WTC11 (cell line): ENCODE measurements at regions of chr21 and their contacts with region 1.

Region 1: DNA sequence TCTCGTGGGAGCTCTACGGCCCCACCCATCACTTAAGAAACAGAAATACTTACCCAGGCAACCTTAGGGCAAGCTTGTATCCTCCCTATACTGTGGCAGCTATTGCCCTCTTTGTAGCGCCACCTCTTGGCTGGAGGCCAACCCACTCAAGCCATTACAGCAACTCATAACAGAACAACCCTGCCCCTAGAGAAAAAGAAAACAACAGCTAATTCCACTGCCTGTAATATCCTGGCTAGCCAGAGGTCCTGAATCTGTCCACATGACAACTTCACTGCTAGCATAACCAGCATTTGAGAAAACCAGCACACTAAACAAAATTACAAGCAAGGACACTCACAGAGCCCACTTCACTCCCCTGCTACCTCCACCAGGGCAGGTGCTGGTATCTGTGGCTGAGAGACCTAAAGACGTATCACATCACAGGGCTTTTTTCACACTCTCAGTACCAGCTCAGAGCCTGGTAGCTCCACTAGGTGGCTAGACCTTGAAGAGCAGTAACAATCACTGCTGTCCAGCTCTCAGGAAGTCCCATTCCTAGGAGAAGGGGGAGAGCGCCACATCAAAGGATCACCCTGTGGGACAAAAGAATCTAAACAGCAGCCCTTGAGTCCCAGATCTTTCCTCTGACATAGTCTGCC is 14.5 kb upstream of the MX1 start:
- DNase-seq: no peak
- ATAC-seq: peak; percentile 79
- H3K4me3 Mint-ChIP-seq: no peak overlapping the region
- H3K27ac Mint-ChIP-seq: no peak overlapping the region
- H3K4me1 Mint-ChIP-seq: no peaks in the 10 kb centered on the region
- H3K27me3 Mint-ChIP-seq: no peaks in the 10 kb centered on the region
- CTCF ChIP-seq: no peak

Region 2: GRCh38 chr21:41369105-41369919 is 42.3 kb before region 1 on chr21:
- CTCF ChIA-PET with region 1: interaction called, 26 read pairs
- POLR2A ChIA-PET with region 1: no interaction called
- DNase-seq: peak; percentile 64
- ATAC-seq: peak; percentile 92
- H3K4me3 Mint-ChIP-seq: peak overlapping the region; percentile 68
- H3K27ac Mint-ChIP-seq: no peak overlapping the region
- H3K4me1 Mint-ChIP-seq: peaks cover 12% of the 10 kb centered on the region
- H3K27me3 Mint-ChIP-seq: no peaks in the 10 kb centered on the region; the same call in 1 of the 2 replicates
- CTCF ChIP-seq: no peak

Region 3: GRCh38 chr21:41396506-41397075 is 15.0 kb before region 1 on chr21:
- CTCF ChIA-PET with region 1: interaction called, 10 read pairs
- POLR2A ChIA-PET with region 1: interaction called, 3 read pairs
- DNase-seq: no peak
- ATAC-seq: peak; percentile 80
- H3K4me3 Mint-ChIP-seq: no peak overlapping the region
- H3K27ac Mint-ChIP-seq: no peak overlapping the region
- H3K4me1 Mint-ChIP-seq: peaks cover 16% of the 10 kb centered on the region
- H3K27me3 Mint-ChIP-seq: no peaks in the 10 kb centered on the region; the same call in 1 of the 2 replicates
- CTCF ChIP-seq: no peak

Region 4: DNA sequence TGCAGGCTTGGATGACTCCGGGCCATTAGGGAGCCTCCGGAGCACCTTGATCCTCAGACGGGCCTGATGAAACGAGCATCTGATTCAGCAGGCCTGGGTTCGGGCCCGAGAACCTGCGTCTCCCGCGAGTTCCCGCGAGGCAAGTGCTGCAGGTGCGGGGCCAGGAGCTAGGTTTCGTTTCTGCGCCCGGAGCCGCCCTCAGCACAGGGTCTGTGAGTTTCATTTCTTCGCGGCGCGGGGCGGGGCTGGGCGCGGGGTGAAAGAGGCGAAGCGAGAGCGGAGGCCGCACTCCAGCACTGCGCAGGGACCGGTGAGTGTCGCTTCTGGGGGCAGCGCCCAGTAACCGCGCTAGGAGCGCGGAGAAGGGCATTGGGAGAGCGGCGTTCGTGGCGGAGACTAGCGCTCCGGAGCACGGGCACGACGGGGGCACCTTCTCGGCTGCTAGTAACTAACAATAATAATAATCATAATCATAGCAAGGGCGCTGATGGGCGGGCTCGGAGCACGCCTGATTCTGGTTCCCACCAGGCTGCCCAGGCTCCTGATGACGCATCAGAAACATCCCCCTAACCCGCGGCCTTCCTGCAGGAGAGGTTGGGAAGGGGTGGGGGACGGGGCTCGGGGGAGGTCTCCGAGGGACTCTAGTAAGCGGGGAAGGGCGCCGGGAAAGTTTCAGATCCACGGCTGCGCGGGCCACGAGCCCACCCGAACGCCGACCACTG is 14.5 kb after region 1 on chr21 and contains the start of gene MX1:
- CTCF ChIA-PET with region 1: interaction called, 17 read pairs
- POLR2A ChIA-PET with region 1: no interaction called
- DNase-seq: peak; percentile 68
- ATAC-seq: peak; percentile 83
- H3K4me3 Mint-ChIP-seq: peak within 1 kb of the TSS; percentile 76
- H3K27ac Mint-ChIP-seq: no peak within 1 kb of the TSS
- H3K4me1 Mint-ChIP-seq: peaks cover 26% of the 10 kb centered on the region
- H3K27me3 Mint-ChIP-seq: peaks cover 69% of the 10 kb centered on the region
- CTCF ChIP-seq: no peak
- total RNA-seq, gene MX1: 3.6 to 4.6 TPM (median 4.0 TPM) in 3 replicates

Region 5: GRCh38 chr21:41521489-41522027 is 110.0 kb after region 1 on chr21:
- CTCF ChIA-PET with region 1: no interaction called
- POLR2A ChIA-PET with region 1: no interaction called
- DNase-seq: no peak
- ATAC-seq: no peak
- H3K4me3 Mint-ChIP-seq: no peak overlapping the region
- H3K27ac Mint-ChIP-seq: no peak overlapping the region
- H3K4me1 Mint-ChIP-seq: no peaks in the 10 kb centered on the region
- H3K27me3 Mint-ChIP-seq: no peaks in the 10 kb centered on the region
- CTCF ChIP-seq: no peak